Motor neuron (in vitro differentiated cells): ENCODE measurements at regions of chr6 and their contacts with region 1.

Region 1: GRCh38 chr6:170329321-170329720 is 22.8 kb downstream of the FAM120B start:
- ATAC-seq: no peak
- H3K4me3 ChIP-seq: no peak overlapping the region
- H3K27ac ChIP-seq: no peak overlapping the region
- H3K4me1 ChIP-seq: no peaks in the 10 kb centered on the region

Region 2: DNA sequence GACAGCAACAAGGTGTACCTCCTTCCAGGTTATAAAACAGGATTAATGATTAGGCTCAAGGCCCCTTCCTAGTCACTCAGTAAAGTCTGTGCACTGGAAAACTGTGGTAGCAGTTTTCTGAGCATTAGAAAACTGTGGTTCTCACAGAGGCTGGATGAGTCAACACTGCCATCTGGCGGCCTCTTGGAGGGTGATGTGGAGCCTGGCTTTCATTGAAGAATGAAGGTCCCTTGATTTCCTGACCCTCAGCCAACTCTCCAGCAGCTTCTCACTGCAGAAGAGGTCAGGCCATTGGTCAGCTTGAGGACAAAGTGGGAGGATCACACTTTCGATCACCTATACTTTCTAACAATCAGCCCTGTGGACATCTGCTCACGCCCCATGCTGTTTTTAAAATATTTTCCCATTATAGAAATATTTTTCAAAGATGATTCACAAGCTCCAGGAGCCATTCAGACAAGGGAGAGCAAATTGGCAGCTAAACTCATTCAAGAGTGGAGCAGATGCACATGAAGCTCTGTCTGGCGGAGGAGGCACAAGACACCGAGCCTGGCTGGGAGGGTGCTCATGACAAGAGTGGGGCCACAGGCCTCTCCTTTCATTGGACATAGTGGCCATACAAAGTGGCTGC is 200.6 kb after region 1 on chr6:
- in situ Hi-C with region 1: loop called in 1 of 9 experiments (anchors 10 kb)
- ATAC-seq: peak; percentile 84 to 94 (median 88)
- H3K4me3 ChIP-seq: no peak overlapping the region
- H3K27ac ChIP-seq: peak overlapping the region in 1 of 2 donors; percentile 9
- H3K4me1 ChIP-seq: no peaks in the 10 kb centered on the region